ENCODE measurements at regions of chr1 and their contacts with region 1.

Region 1: GRCh38 chr1:204151552-204152309 is at the start of gene ETNK2:
- DNase-seq: peak; percentile 88
- ATAC-seq: peak; percentile 58
- total RNA-seq, gene ETNK2: 13.7 TPM

Region 2: DNA sequence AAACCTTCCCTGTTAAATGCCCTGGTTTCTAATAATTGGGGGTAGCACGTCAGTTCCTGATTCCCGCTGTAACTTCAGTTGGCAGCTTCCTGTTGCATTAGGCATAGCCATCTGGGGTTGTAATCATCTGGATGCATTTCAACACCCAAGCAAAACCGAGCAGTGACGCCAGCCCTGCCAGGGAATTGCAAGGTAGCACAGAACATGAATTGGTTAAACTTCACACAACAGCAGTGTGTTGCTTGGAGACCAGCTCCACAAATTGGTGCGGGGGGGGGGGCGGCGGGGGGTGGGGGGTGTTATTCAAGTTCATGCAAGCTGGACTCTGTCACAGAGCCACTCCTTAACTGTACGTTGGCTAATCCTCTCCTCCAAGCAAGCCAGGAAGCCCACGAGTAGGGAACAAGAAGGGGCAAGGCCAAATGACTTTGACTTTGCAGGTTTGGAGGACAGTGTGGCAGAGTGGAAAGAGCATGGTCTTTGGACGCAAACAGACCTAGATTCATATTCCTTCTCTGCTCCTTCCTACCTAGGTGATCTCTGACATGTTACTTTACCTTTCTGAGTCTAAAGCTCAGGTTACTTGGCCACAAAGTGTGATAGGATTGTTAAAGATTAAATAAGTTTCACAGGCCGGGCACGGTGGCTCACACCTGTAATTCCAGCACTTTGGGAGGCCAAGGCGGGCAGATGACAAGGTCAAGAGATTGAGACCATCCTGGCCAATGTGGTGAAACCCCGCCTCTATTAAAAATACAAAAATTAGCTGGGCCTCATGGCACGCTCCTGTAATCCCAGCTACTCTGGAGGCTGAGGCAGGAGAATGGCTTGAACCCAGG is 382.0 kb before region 1 on chr1:
- intact Hi-C with region 1: no loop called
- DNase-seq: no peak
- ATAC-seq: peak; percentile 87

Region 3: GRCh38 chr1:204213668-204214662 is 62.2 kb after region 1 on chr1 and contains the start of gene GOLT1A:
- intact Hi-C with region 1: loop called (anchors 2 kb)
- DNase-seq: peak; percentile 80
- ATAC-seq: peak; percentile 90
- total RNA-seq, gene GOLT1A: 0.40 TPM

Region 4: GRCh38 chr1:204225841-204226735 is 74.4 kb after region 1 on chr1:
- intact Hi-C with region 1: no loop called
- DNase-seq: no peak
- ATAC-seq: peak; percentile 45